ENCODE measurements at regions of chr6 and their contacts with region 1.

Region 1: GRCh38 chr6:87154993-87155841 is at the start of gene ZNF292:
- DNase-seq: peak; percentile 88 to 97
- ATAC-seq: peak; percentile 66 to 88 (median 80)
- H3K4me3 ChIP-seq: peak within 1 kb of the TSS; percentile 85
- H3K4me3 Mint-ChIP-seq: peak within 1 kb of the TSS; percentile 91
- H3K27ac ChIP-seq: peak within 1 kb of the TSS; percentile 96
- H3K27ac Mint-ChIP-seq: peak within 1 kb of the TSS; percentile 97 to 99
- H3K4me1 ChIP-seq: peaks cover 30% of the 10 kb centered on the region
- H3K4me1 Mint-ChIP-seq: peaks cover 52 to 53% of the 10 kb centered on the region in 2 donors
- H3K27me3 ChIP-seq: no peaks in the 10 kb centered on the region
- H3K27me3 Mint-ChIP-seq: no peaks in the 10 kb centered on the region
- CTCF ChIP-seq: no peak
- total RNA-seq, gene ZNF292: 78.7 to 90.4 (median 89.4) TPM

Region 2: DNA sequence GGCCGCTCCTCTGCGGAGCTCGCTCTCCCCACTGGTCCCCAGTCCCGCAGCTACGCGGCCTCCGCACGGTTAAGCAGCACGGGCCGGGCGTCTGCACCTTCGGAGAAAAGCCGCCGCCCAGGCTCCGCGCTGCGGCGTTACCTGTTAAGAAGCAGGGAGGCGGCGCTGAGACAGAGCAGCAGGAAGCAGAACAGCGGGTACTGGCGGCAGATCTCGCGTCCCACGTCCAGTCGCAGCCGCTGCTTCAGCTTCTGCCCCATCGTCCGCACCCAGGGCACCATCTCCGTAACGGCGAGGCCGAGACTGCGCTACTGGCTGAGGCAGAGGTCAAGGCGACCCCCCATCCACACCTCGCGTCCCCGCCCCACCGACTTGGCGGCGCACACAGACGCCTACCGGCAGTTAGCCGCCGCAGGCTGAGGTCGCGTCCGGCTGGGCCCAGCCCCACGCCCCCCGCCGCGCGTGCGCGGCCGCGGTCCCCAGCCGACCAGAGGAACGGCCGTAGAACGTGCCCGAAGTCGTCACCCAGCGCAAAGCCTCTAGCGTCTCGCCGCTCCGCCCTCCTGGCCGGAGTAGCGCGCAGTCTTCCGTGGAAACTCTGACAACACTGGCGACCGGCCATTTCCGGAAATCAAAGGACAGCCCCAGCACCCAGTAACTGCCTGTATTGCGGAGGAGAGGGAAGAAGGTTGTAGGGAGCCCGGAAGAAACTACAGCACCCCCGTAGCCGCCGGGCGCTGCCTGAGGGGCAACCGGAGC is 1561.6 kb before region 1 on chr6 and contains the start of gene SNX14:
- intact Hi-C with region 1: loop called (anchors 5 kb)
- DNase-seq: peak; percentile 75 to 86
- ATAC-seq: peak; percentile 73 to 92 (median 79)
- H3K4me3 ChIP-seq: peak within 1 kb of the TSS; percentile 94
- H3K4me3 Mint-ChIP-seq: peak within 1 kb of the TSS; percentile 96
- H3K27ac ChIP-seq: peak within 1 kb of the TSS; percentile 91
- H3K27ac Mint-ChIP-seq: peak within 1 kb of the TSS; percentile 92 to 98
- H3K4me1 ChIP-seq: peaks cover 11% of the 10 kb centered on the region
- H3K4me1 Mint-ChIP-seq: peaks cover 52 to 56% of the 10 kb centered on the region in 2 donors
- H3K27me3 ChIP-seq: no peaks in the 10 kb centered on the region
- H3K27me3 Mint-ChIP-seq: no peaks in the 10 kb centered on the region
- CTCF ChIP-seq: no peak
- total RNA-seq, gene SNX14: 73.0 to 109 (median 80.3) TPM

Region 3: DNA sequence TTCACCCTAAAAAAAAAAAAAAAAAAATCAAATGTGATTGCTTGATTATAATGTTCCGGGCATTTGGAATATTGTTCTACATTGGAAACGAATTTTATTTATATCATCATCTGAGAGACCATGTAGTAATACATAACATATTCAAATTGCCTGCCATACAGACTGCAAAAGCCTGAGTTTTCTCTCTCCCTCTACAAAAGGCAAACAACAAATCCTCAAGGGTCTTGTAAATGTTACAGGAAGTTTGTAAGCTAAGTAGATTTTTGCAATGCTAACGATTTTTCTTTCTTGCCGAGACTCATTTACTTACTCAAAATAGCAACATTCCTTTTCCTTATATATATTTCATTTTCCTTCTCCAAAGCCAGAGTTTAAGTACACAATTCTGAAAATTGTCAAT is 266.9 kb before region 1 on chr6:
- intact Hi-C with region 1: no loop called
- DNase-seq: no peak
- ATAC-seq: no peak
- H3K4me3 ChIP-seq: no peak overlapping the region
- H3K4me3 Mint-ChIP-seq: no peak overlapping the region
- H3K27ac ChIP-seq: no peak overlapping the region
- H3K27ac Mint-ChIP-seq: no peak overlapping the region
- H3K4me1 ChIP-seq: no peaks in the 10 kb centered on the region
- H3K4me1 Mint-ChIP-seq: no peaks in the 10 kb centered on the region
- H3K27me3 ChIP-seq: no peaks in the 10 kb centered on the region
- H3K27me3 Mint-ChIP-seq: no peaks in the 10 kb centered on the region
- CTCF ChIP-seq: no peak

Region 4: GRCh38 chr6:87139236-87139635 is 16.0 kb before region 1 on chr6:
- intact Hi-C with region 1: loop called (anchors 2 kb)
- DNase-seq: peak in 1 of 2 donors; percentile 84
- ATAC-seq: peak; percentile 77 to 89 (median 89)
- H3K4me3 ChIP-seq: no peak overlapping the region
- H3K4me3 Mint-ChIP-seq: no peak overlapping the region
- H3K27ac ChIP-seq: no peak overlapping the region
- H3K27ac Mint-ChIP-seq: no peak overlapping the region
- H3K4me1 ChIP-seq: no peaks in the 10 kb centered on the region
- H3K4me1 Mint-ChIP-seq: peaks cover 0 to 5% of the 10 kb centered on the region in 2 donors
- H3K27me3 ChIP-seq: peaks cover 2% of the 10 kb centered on the region
- H3K27me3 Mint-ChIP-seq: peaks cover 26 to 40% of the 10 kb centered on the region in 2 donors
- CTCF ChIP-seq: peak; percentile 88

Region 5: DNA sequence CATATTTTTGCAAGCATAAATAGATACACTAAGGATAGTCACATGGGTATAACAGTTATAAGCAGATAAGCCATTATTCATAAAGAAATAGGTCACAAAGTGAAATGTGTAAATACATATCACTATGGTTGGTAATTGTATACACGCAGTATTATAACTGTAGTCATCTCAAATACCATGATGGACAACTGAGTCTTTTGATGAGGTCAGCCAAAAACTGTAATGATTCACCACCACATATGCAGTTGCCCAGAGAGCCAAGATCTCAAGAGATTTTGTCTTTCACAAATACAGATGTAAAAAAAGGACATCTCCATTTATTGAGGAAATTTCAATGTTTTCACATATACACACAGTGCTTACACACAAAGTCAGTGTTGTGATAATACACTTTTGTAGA is 28.5 kb after region 1 on chr6:
- intact Hi-C with region 1: no loop called
- DNase-seq: no peak
- ATAC-seq: no peak
- H3K4me3 ChIP-seq: no peak overlapping the region
- H3K4me3 Mint-ChIP-seq: no peak overlapping the region
- H3K27ac ChIP-seq: no peak overlapping the region
- H3K27ac Mint-ChIP-seq: no peak overlapping the region
- H3K4me1 ChIP-seq: peaks cover 11% of the 10 kb centered on the region
- H3K4me1 Mint-ChIP-seq: peaks cover 52 to 57% of the 10 kb centered on the region in 2 donors
- H3K27me3 ChIP-seq: no peaks in the 10 kb centered on the region
- H3K27me3 Mint-ChIP-seq: no peaks in the 10 kb centered on the region
- CTCF ChIP-seq: no peak

Region 6: DNA sequence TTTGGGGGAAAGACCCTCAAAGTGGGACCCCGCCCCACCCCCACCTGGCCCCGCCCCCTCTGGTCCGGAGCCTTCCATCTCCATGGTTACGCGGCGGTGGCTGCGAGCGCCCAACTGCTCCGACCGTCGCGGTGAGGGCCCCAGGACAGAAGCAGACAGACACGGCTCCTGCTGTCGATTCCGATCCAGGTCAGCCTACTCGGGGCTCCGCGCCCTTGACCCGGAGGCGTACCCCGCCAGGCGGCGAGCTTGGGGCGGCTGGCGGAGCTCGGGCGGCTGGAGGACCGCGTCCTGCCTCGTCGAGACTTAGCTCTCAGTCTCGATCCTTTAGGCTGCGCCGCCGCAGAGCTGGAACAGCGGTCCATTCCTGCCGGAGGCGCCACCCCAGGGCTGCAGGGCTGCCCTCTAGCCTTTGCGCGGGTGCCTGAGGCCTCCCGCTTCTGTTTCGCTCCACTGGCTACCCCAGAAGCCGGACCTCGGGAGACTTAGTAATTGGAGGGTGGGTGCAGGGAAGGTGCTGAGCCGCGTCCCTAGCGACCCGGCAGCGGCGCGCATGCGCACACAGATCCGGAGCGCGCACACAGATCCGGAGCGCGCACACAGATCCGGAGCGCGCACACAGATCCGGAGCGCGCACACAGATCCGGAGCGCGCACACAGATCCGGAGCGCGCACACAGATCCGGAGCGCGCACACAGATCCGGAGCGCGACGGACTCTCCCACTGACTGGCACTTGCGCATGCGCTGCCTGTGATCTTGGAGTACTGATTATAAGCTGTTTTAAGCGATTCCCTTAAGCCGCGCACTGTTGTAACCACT is 252.9 kb after region 1 on chr6 and contains the start of gene CFAP206:
- intact Hi-C with region 1: loop called (anchors 5 kb)
- DNase-seq: peak; percentile 76 to 93
- ATAC-seq: peak; percentile 79 to 93 (median 83)
- H3K4me3 ChIP-seq: peak within 1 kb of the TSS; percentile 55
- H3K4me3 Mint-ChIP-seq: peak within 1 kb of the TSS; percentile 91
- H3K27ac ChIP-seq: peak within 1 kb of the TSS; percentile 48
- H3K27ac Mint-ChIP-seq: peak within 1 kb of the TSS; percentile 78
- H3K4me1 ChIP-seq: peaks cover 12% of the 10 kb centered on the region
- H3K4me1 Mint-ChIP-seq: peaks cover 6 to 16% of the 10 kb centered on the region in 2 donors
- H3K27me3 ChIP-seq: peaks cover 10% of the 10 kb centered on the region
- H3K27me3 Mint-ChIP-seq: peaks cover 9 to 32% of the 10 kb centered on the region in 2 donors
- CTCF ChIP-seq: no peak
- total RNA-seq, gene CFAP206: not detected

Region 7: GRCh38 chr6:87701676-87702588 is 546.7 kb after region 1 on chr6 and contains the start of gene AKIRIN2:
- intact Hi-C with region 1: loop called (anchors 2 kb)
- DNase-seq: peak; percentile 97 to 99
- ATAC-seq: peak; percentile 78 to 92 (median 83)
- H3K4me3 ChIP-seq: peak within 1 kb of the TSS; percentile 87
- H3K4me3 Mint-ChIP-seq: peak within 1 kb of the TSS; percentile 99
- H3K27ac ChIP-seq: peak within 1 kb of the TSS; percentile 97
- H3K27ac Mint-ChIP-seq: peak within 1 kb of the TSS; percentile 94 to 98
- H3K4me1 ChIP-seq: no peaks in the 10 kb centered on the region
- H3K4me1 Mint-ChIP-seq: peaks cover 51 to 54% of the 10 kb centered on the region in 2 donors
- H3K27me3 ChIP-seq: no peaks in the 10 kb centered on the region
- H3K27me3 Mint-ChIP-seq: no peaks in the 10 kb centered on the region
- CTCF ChIP-seq: no peak
- total RNA-seq, gene AKIRIN2: 102 to 156 (median 108) TPM

Measured in natural killer cell (primary cell).